ENCODE measurements at regions of chr2 and their contacts with region 1.

Region 1: GRCh38 chr2:97806738-97807618 is 93.6 kb downstream of the ZAP70 start:
- DNase-seq: peak; percentile 95

Region 2: DNA sequence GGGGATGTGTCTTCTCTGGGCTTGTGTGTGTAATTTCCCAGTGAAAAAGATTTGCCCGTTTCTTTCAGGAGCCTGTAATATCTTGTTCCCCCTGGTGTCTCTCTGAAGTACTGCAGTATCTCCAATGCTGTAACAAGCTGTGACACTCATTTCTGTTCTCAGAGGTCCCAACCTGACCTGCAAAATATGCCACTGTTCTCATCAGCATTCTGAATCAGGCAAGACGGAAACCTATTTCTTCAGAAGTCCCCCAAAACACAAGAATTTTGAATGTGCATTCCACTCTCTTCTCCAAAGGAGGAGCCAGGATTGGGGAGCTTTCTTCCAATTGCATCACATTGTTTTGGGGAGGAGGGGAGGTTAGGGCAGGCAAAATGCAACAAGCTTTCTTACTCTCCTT is 462.3 kb after region 1 on chr2:
- intact Hi-C with region 1: loop called (anchors 5 to 10 kb)
- DNase-seq: no peak

Region 3: GRCh38 chr2:98379672-98380535 is 572.9 kb after region 1 on chr2:
- intact Hi-C with region 1: loop called in 1 of 2 experiments (anchors 5 kb)
- DNase-seq: peak; percentile 57